ENCODE measurements at regions of chr3 and their contacts with region 1.

Region 1: GRCh38 chr3:188286087-188286513 is 132.1 kb downstream of the LPP start:
- DNase-seq: peak; percentile 32
- H3K4me3 Mint-ChIP-seq: no peak overlapping the region
- H3K27ac Mint-ChIP-seq: no peak overlapping the region
- H3K4me1 Mint-ChIP-seq: peaks cover 45% of the 10 kb centered on the region
- H3K27me3 Mint-ChIP-seq: no peaks in the 10 kb centered on the region

Region 2: DNA sequence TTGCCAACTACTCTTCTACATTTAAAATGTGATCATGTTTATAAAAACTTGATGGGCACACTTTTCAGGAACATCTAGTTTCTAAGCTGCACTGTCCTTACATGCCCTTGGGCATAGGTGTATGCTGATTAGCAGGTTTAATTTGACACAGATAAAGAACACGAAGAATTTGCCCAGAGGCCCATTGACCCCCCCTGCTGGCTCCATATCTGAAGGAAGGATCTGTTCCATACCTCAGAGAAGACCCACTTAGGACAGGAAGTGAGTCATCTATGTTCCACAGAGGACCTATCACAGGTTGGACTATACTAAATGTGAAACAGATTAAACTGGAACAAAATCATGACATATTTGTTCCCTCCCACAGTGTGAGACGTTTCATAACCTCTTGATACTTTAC is 225.0 kb before region 1 on chr3:
- CTCF ChIA-PET with region 1: no interaction called
- intact Hi-C with region 1: loop called (anchors 1 kb)
- DNase-seq: peak; percentile 74
- H3K4me3 Mint-ChIP-seq: no peak overlapping the region
- H3K27ac Mint-ChIP-seq: peak overlapping the region; percentile 68
- H3K4me1 Mint-ChIP-seq: peaks cover 32% of the 10 kb centered on the region
- H3K27me3 Mint-ChIP-seq: no peaks in the 10 kb centered on the region

Region 3: GRCh38 chr3:188253800-188254452 is 32.2 kb before region 1 on chr3:
- CTCF ChIA-PET with region 1: interaction called, 7 read pairs
- intact Hi-C with region 1: loop called (anchors 1 kb)
- DNase-seq: peak; percentile 54
- H3K4me3 Mint-ChIP-seq: no peak overlapping the region
- H3K27ac Mint-ChIP-seq: peak overlapping the region; percentile 76
- H3K4me1 Mint-ChIP-seq: peaks cover 44% of the 10 kb centered on the region
- H3K27me3 Mint-ChIP-seq: no peaks in the 10 kb centered on the region

Region 4: DNA sequence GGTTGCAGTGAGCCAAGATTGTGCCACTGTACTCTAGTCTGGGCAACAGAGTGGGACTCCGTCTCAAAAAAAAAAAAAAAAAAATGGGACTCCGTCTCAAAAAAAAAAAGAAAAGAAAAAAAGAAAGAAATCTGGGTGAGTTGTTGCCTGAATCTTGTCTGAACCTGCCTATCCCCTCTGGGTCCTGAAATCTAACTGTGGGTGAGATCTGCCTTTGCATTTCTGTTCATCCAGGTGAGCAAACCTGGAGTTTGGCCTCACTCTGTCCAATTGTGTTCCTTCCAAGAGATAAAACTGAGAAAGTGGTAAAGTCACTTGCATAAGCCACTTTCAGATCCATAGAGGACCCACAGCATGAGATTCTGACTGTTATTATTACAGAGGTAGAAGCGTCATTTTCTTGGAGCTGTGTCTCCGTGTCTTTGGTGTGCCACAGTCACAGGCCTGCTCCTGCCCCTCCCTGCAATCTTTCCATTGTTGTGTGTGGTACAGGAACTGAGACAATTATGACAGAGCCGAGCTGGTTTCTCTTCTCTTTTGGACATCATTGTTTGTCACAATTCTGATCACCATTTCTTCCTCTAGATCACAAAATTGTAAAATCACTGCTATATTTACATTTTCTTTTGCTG is 103.7 kb after region 1 on chr3:
- CTCF ChIA-PET with region 1: no interaction called
- intact Hi-C with region 1: loop called (anchors 1 kb)
- DNase-seq: peak; percentile 85
- H3K4me3 Mint-ChIP-seq: no peak overlapping the region
- H3K27ac Mint-ChIP-seq: peak overlapping the region; percentile 67
- H3K4me1 Mint-ChIP-seq: peaks cover 39% of the 10 kb centered on the region
- H3K27me3 Mint-ChIP-seq: no peaks in the 10 kb centered on the region

Region 5: GRCh38 chr3:188782613-188783124 is 496.6 kb after region 1 on chr3:
- CTCF ChIA-PET with region 1: no interaction called
- intact Hi-C with region 1: no loop called
- DNase-seq: no peak
- H3K4me3 Mint-ChIP-seq: no peak overlapping the region
- H3K27ac Mint-ChIP-seq: no peak overlapping the region
- H3K4me1 Mint-ChIP-seq: peaks cover 8% of the 10 kb centered on the region
- H3K27me3 Mint-ChIP-seq: no peaks in the 10 kb centered on the region

Measured in activated naive CD4-positive, alpha-beta T cell treated with anti-CD3 and anti-CD28 coated beads for 36 hours (primary cell).